ENCODE measurements at regions of chr19 and their contacts with region 1.

Region 1: GRCh38 chr19:43519436-43520088 is 7.4 kb downstream of the ETHE1 start:
- DNase-seq: peak; percentile 68 to 89 (median 70)
- ATAC-seq: peak; percentile 90
- H3K4me3 ChIP-seq: no peak overlapping the region
- H3K27ac ChIP-seq: no peak overlapping the region
- H3K4me1 ChIP-seq: peaks cover 0 to 5% of the 10 kb centered on the region in 2 experiments; a peak in 3 of 5 replicates
- H3K27me3 ChIP-seq: no peaks in the 10 kb centered on the region
- CTCF ChIP-seq: peak; percentile 88 to 95 (median 89)
- EP300 ChIP-seq: no peak
- POLR2A ChIP-seq: no peak
- RAD21 ChIP-seq: peak; percentile 91 to 97

Region 2: GRCh38 chr19:43433358-43433673 is 86.2 kb before region 1 on chr19:
- CTCF ChIA-PET with region 1: interaction called, 22 read pairs
- POLR2A ChIA-PET with region 1: interaction called, 6 read pairs
- in situ Hi-C with region 1: no loop called
- intact Hi-C with region 1: loop called (anchors 1 kb)
- DNase-seq: no peak
- ATAC-seq: no peak
- H3K4me3 ChIP-seq: no peak overlapping the region
- H3K27ac ChIP-seq: no peak overlapping the region
- H3K4me1 ChIP-seq: no peaks in the 10 kb centered on the region
- H3K27me3 ChIP-seq: peaks cover 0 to 4% of the 10 kb centered on the region in 2 experiments; a peak in 1 of 5 replicates
- CTCF ChIP-seq: no peak
- EP300 ChIP-seq: no peak
- POLR2A ChIP-seq: no peak
- RAD21 ChIP-seq: no peak

Region 3: GRCh38 chr19:43765109-43765876 is 245.7 kb after region 1 on chr19:
- CTCF ChIA-PET with region 1: no interaction called
- POLR2A ChIA-PET with region 1: no interaction called
- in situ Hi-C with region 1: no loop called
- intact Hi-C with region 1: no loop called
- DNase-seq: peak in 3 of 4 experiments; percentile 37 to 80 (median 47)
- ATAC-seq: peak; percentile 50
- H3K4me3 ChIP-seq: no peak overlapping the region
- H3K27ac ChIP-seq: peak overlapping the region; percentile 76
- H3K4me1 ChIP-seq: peaks cover 30 to 37% of the 10 kb centered on the region in 2 experiments
- H3K27me3 ChIP-seq: no peaks in the 10 kb centered on the region
- CTCF ChIP-seq: no peak
- EP300 ChIP-seq: no peak
- POLR2A ChIP-seq: no peak
- RAD21 ChIP-seq: no peak